A549 (cell line): ENCODE measurements at regions of chr1 and their contacts with region 1.

Region 1: GRCh38 chr1:202576816-202577215 is 133.4 kb downstream of the SYT2 start:
- DNase-seq: no peak
- ATAC-seq: no peak; a peak in 1 of 6 replicates
- H3K4me3 ChIP-seq: no peak overlapping the region
- H3K27ac ChIP-seq: peak overlapping the region; percentile 9 to 34; a peak in 5 of 6 replicates
- H3K4me1 ChIP-seq: peaks cover 34% of the 10 kb centered on the region
- CTCF ChIP-seq: no peak
- EP300 ChIP-seq: no peak
- POLR2A ChIP-seq: no peak
- RAD21 ChIP-seq: no peak

Region 2: DNA sequence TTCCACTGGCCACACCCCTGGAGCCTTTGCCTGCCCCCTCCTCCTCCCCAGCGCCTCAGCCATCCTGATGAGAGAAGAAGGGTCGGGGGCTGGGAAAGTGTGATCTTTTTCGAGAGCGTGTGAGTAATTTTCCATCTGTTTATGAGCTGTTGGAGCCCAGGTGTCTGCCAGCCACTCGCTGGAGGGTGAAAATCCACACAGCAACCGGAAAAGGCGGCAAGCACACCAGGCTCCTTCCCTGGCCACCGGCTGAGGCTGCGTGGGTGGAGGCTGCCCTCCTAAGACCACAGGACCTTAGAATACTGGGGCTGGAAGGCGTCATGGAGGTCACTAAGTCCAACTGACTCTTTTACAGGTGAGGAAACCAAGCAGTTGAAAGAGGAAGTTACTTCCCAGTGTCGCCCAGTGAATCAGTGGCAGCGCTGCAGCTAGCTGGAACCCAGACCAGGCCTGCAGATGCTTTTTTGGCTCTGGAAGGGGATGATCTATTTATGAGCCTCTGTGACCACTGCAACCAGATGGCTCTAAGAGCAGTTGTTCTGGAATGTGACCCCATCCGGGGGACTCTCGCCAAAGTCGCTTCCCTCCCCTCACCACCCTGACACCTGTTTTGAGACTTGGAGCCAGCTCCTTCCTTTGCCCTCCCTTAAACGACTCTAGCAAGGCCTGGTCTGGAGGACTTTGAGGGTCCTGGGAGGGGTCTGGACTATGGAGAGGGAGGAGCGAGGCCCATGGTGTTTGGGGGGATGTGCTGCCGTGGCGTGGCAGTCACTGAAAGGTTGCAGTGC is 328.7 kb before region 1 on chr1:
- CTCF ChIA-PET with region 1: no interaction called
- POLR2A ChIA-PET with region 1: no interaction called
- DNase-seq: no peak
- ATAC-seq: no peak
- H3K4me3 ChIP-seq: no peak overlapping the region
- H3K27ac ChIP-seq: no peak overlapping the region
- H3K4me1 ChIP-seq: no peaks in the 10 kb centered on the region
- CTCF ChIP-seq: no peak
- EP300 ChIP-seq: no peak
- POLR2A ChIP-seq: no peak
- RAD21 ChIP-seq: no peak

Region 3: DNA sequence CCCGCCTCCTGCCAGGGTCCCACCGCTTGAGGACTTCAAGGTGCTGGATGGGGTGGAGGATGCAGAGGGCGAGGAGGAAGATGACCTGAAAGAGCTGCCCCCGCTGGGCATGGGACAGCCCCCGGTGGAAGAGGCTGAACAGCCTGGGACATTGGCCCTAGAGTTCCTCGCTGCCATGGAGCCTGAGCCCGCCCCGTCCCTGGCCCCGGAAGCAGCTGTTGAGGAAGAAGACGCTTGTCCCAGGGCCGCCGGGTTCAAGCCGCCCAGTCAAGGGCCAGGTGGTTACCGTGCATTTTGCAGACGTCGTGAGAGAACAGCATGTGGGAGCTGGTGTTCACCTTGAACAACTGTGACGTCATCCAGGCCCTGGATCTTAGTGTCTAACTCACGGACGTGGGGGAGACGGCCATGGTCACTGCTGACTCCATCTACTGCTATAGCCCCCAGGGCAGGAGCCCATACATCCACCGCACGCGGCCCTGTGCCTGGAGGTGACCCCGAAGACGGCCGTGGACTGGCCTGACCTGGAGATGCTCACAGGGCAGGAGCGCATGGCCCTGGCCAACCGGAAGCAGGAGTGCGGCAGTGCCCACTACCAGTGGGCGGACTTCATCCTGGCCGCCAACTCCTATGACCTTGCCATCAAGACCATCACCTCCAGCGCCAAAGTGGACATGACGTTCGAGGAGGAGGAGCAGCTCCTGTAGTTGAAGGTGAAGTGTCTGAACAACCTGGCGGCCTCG is 138.2 kb before region 1 on chr1:
- CTCF ChIA-PET with region 1: no interaction called
- POLR2A ChIA-PET with region 1: no interaction called
- DNase-seq: no peak
- ATAC-seq: no peak
- H3K4me3 ChIP-seq: no peak overlapping the region
- H3K27ac ChIP-seq: no peak overlapping the region
- H3K4me1 ChIP-seq: no peaks in the 10 kb centered on the region
- CTCF ChIP-seq: no peak
- EP300 ChIP-seq: no peak
- POLR2A ChIP-seq: no peak
- RAD21 ChIP-seq: no peak

Region 4: GRCh38 chr1:202501281-202501680 is 75.5 kb before region 1 on chr1:
- CTCF ChIA-PET with region 1: interaction called, 14 read pairs
- POLR2A ChIA-PET with region 1: no interaction called
- DNase-seq: peak; percentile 3 to 41
- ATAC-seq: peak; percentile 84 to 87
- H3K4me3 ChIP-seq: no peak overlapping the region
- H3K27ac ChIP-seq: no peak overlapping the region
- H3K4me1 ChIP-seq: peaks cover 5% of the 10 kb centered on the region; the same call in 1 of the 3 replicates
- CTCF ChIP-seq: peak; percentile 74
- EP300 ChIP-seq: no peak
- POLR2A ChIP-seq: no peak
- RAD21 ChIP-seq: peak; percentile 77 to 85

Region 5: GRCh38 chr1:202561726-202562443 is 14.9 kb before region 1 on chr1:
- CTCF ChIA-PET with region 1: interaction called, 10 read pairs
- POLR2A ChIA-PET with region 1: no interaction called
- DNase-seq: no peak
- ATAC-seq: 0 out of 6 replicates have a peak, but pooled peaks of 1 of the 2 experiments have one; percentile 50
- H3K4me3 ChIP-seq: no peak overlapping the region
- H3K27ac ChIP-seq: no peak overlapping the region
- H3K4me1 ChIP-seq: 0 out of 3 replicates have a peak, but pooled peaks cover 4% of the 10 kb centered on the region
- CTCF ChIP-seq: no peak
- EP300 ChIP-seq: no peak
- POLR2A ChIP-seq: no peak
- RAD21 ChIP-seq: no peak

Region 6: GRCh38 chr1:202671122-202671797 is 94.4 kb after region 1 on chr1:
- CTCF ChIA-PET with region 1: no interaction called
- POLR2A ChIA-PET with region 1: no interaction called
- DNase-seq: no peak
- ATAC-seq: no peak
- H3K4me3 ChIP-seq: no peak overlapping the region
- H3K27ac ChIP-seq: no peak overlapping the region
- H3K4me1 ChIP-seq: no peaks in the 10 kb centered on the region
- CTCF ChIP-seq: no peak
- EP300 ChIP-seq: no peak
- POLR2A ChIP-seq: no peak
- RAD21 ChIP-seq: no peak